IMR-90 (cell line): ENCODE measurements at regions of chr3 and their contacts with region 1.

Region 1: GRCh38 chr3:37338500-37338899 is 164.1 kb upstream of the LRRFIP2 start:
- DNase-seq: no peak
- ATAC-seq: no peak
- H3K4me3 ChIP-seq: no peak overlapping the region
- H3K27ac ChIP-seq: no peak overlapping the region
- H3K4me1 ChIP-seq: no peaks in the 10 kb centered on the region
- H3K27me3 ChIP-seq: no peaks in the 10 kb centered on the region
- CTCF ChIP-seq: no peak
- POLR2A ChIP-seq: no peak
- RAD21 ChIP-seq: no peak

Region 2: GRCh38 chr3:37301980-37302708 is 36.4 kb before region 1 on chr3:
- CTCF ChIA-PET with region 1: no interaction called
- POLR2A ChIA-PET with region 1: no interaction called
- dilution Hi-C with region 1: no loop called
- in situ Hi-C with region 1: no loop called
- intact Hi-C with region 1: loop called (anchors 5 kb)
- DNase-seq: no peak
- ATAC-seq: no peak
- H3K4me3 ChIP-seq: no peak overlapping the region
- H3K27ac ChIP-seq: no peak overlapping the region
- H3K4me1 ChIP-seq: no peaks in the 10 kb centered on the region
- H3K27me3 ChIP-seq: no peaks in the 10 kb centered on the region
- CTCF ChIP-seq: no peak
- POLR2A ChIP-seq: no peak
- RAD21 ChIP-seq: no peak

Region 3: DNA sequence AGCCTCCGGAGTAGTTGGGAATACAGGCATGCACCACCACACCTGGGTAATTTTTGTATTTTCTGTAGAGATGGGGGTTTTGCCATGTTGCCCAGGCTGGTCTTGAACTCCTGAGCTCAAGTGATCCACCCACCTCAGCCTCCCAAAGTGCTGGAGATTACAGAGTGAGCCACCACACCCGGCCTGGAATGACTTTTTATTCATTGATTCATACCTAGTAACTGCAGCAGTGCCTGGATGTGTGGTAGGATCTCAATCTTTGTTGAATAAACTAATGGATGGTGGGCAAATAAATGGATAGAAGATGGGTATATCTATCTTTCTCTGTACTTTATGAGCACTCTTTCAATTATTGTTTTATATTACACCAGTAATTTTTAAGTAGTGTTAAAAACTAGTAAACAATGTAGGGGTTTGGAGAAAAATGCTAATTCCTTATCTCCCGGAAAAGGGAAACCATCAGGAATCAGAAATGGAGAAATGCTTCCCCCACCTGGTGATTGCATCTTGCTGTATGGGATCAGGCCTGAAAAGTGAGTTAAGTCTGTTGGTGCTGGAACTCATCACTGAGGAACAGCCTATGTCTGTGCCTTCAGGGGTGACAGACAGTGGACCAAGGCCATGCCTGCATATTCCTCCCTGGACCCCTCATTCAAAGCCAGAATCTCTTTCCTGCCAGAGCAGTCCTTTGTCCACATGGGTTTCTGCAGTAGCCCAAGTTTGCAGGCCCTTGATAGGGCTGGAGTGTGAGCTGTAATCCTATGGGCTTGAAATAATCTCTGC is 362.2 kb after region 1 on chr3:
- CTCF ChIA-PET with region 1: no interaction called
- POLR2A ChIA-PET with region 1: no interaction called
- dilution Hi-C with region 1: no loop called
- in situ Hi-C with region 1: no loop called
- intact Hi-C with region 1: no loop called
- DNase-seq: no peak
- ATAC-seq: no peak
- H3K4me3 ChIP-seq: no peak overlapping the region
- H3K27ac ChIP-seq: no peak overlapping the region
- H3K4me1 ChIP-seq: no peaks in the 10 kb centered on the region
- H3K27me3 ChIP-seq: peaks cover 9% of the 10 kb centered on the region
- CTCF ChIP-seq: no peak
- POLR2A ChIP-seq: no peak
- RAD21 ChIP-seq: no peak